Thyroid gland (tissue), 4 donors: ENCODE measurements at regions of chr15 and their contacts with region 1.

Region 1: DNA sequence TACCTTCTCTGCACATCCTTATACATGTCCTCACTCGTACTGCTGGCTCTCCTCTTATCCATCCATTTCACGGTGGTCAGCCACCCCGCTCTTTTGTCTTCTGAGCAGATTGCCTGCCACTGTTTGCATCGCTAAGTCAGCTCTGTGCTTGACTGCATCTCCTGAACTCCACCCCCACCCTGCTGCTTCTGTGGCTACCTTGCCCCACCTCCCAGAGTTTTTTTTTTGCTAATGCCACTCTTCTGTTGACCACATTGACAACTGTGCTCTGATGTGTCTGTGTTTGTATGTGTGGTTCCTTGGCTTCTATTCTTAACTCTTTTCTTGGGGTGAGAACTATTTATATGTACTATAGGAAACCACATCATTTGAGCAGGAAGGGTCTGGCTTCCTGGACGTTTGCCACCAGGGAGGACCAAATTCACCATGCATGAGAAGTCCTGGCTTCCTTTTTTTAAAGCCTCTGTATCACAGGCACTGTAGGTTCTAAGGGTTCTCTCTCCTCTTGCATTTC is 12.8 kb upstream of the MTMR10 start:
- DNase-seq: no peak
- H3K4me3 ChIP-seq: no peak overlapping the region
- H3K27ac ChIP-seq: no peak overlapping the region
- H3K4me1 ChIP-seq: no peaks in the 10 kb centered on the region
- H3K27me3 ChIP-seq: no peaks in the 10 kb centered on the region
- CTCF ChIP-seq: no peak
- POLR2A ChIP-seq: no peak

Region 2: DNA sequence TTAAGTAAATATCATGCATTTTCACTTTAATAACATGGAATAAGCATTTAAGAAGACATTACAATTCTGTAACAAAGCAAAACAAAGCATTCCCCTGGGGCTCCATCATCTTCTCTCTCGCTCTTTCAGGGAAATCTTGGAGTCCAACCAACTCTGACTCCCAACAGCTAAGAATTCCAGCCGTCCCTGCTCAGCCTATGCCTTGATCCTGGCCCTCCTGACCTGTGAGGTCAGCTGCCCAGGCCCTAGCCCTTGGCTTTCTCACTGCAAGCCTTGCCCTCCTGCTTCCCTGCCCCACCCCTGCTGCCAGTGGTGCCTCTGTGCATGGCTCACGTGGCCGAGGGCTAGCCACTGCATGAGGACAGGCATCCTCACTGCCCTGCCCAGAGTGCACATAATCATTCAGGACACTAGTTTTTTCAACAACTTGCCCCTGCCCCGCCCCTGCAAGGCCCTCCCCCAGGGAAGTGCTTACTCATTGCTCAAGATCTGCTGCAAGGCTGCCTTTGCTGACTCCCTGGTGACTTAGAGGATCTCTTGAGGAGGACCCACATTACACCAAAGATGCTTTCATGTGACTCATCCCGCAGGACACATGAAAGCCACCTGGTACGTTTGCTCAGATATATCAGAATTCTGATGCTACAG is 50.4 kb before region 1 on chr15:
- intact Hi-C with region 1: no loop called
- DNase-seq: no peak
- H3K4me3 ChIP-seq: no peak overlapping the region
- H3K27ac ChIP-seq: no peak overlapping the region
- H3K4me1 ChIP-seq: no peaks in the 10 kb centered on the region
- H3K27me3 ChIP-seq: no peaks in the 10 kb centered on the region
- CTCF ChIP-seq: no peak
- POLR2A ChIP-seq: no peak

Region 3: GRCh38 chr15:31069360-31070000 is 65.2 kb after region 1 on chr15:
- intact Hi-C with region 1: loop called (anchors 10 kb)
- DNase-seq: no peak
- H3K4me3 ChIP-seq: no peak overlapping the region
- H3K27ac ChIP-seq: no peak overlapping the region
- H3K4me1 ChIP-seq: no peaks in the 10 kb centered on the region
- H3K27me3 ChIP-seq: no peaks in the 10 kb centered on the region
- CTCF ChIP-seq: no peak
- POLR2A ChIP-seq: no peak

Region 4: GRCh38 chr15:31136016-31136415 is 131.7 kb after region 1 on chr15:
- intact Hi-C with region 1: loop called (anchors 10 kb)
- DNase-seq: no peak
- H3K4me3 ChIP-seq: no peak overlapping the region
- H3K27ac ChIP-seq: no peak overlapping the region
- H3K4me1 ChIP-seq: peaks cover 0 to 6% of the 10 kb centered on the region in 2 donors
- H3K27me3 ChIP-seq: no peaks in the 10 kb centered on the region
- CTCF ChIP-seq: no peak
- POLR2A ChIP-seq: no peak